Vagina (tissue), 2 donors: ENCODE measurements at regions of chr3 and their contacts with region 1.

Region 1: GRCh38 chr3:184314363-184314699 is at the start of gene EIF4G1:
- DNase-seq: peak in 1 of 2 donors; percentile 96
- H3K4me3 ChIP-seq: peak within 1 kb of the TSS; percentile 66 to 94
- H3K27ac ChIP-seq: peak within 1 kb of the TSS; percentile 94
- H3K4me1 ChIP-seq: peaks cover 41% of the 10 kb centered on the region
- H3K27me3 ChIP-seq: no peaks in the 10 kb centered on the region
- CTCF ChIP-seq: no peak
- POLR2A ChIP-seq: peak in 1 of 2 donors; percentile 54
- total RNA-seq, gene EIF4G1: 207 TPM

Region 2: DNA sequence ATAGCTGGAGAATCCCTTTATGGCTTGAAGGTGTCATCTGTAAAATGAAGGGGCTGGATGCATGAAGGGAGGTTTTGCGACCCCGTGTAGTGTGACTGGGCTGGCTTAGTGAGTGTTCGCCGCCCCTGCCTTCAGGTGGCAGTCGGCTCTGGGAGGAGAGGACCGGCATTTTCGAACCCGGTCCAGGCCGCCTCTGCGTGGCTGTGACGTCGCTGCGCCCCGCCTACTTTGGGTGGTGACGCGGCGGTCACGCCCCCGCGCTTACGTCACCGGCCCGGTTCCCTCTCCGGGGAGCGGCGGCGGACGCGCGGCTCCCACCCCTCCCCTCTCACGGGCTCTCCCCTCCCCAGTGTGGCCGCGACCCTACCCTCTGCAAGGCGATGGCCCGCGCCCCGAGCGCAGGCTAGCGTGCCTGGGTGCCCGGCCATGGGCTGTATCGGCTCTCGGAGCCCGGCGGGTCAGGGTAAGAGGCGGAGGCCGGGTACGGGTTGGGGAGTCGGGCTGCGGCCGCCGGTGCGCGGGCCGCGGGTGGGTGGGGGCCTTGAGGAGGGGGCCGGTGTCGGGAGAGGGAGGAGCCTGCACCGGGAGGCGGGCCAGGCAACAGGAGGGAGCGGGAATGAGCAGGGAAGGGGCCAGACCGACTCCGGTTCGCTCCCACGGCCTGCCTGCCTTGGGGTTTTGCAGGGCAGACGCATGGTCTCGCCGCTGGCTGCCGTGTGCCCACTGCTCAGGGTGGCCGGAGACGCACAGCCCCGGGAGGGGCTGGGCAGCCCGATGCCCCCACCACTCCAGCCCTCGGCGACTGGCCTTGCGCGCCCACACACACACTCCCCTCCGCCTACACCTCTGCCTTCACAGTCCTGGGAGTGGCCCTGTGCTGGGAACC is 21.6 kb after region 1 on chr3:
- intact Hi-C with region 1: loop called (anchors 1 kb)
- DNase-seq: no peak
- H3K4me3 ChIP-seq: peak overlapping the region; percentile 76 to 85
- H3K27ac ChIP-seq: peak overlapping the region; percentile 97
- H3K4me1 ChIP-seq: peaks cover 48% of the 10 kb centered on the region
- H3K27me3 ChIP-seq: no peaks in the 10 kb centered on the region
- CTCF ChIP-seq: no peak
- POLR2A ChIP-seq: peak in 1 of 2 donors; percentile 92

Region 3: DNA sequence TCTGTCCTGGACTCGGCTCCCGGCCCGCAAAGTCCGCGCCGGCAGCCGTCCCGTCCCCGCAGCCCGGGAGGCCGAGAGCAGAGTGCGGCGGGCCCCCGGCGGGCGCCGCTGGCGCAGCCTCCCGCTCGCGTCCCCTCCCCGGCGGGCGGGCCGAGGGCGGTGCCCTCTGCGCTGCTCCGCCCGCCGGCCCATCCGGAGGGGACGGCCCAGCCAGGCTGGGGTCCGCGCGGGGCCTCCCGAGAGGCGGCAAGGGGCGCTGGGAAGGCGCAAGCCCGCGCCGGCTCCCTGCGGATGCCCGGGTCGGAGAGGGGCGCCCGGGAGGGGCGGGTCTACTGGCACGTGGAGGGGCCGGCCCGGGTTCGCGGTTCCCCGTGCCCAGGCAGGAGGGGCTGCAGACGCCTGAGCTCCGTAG is 47.2 kb after region 1 on chr3 and contains the starts of genes CLCN2 and POLR2H:
- intact Hi-C with region 1: loop called (anchors 1 kb)
- DNase-seq: no peak
- H3K4me3 ChIP-seq: peak within 1 kb of the TSS; percentile 87 to 96
- H3K27ac ChIP-seq: peak within 1 kb of the TSS; percentile 92
- H3K4me1 ChIP-seq: peaks cover 31% of the 10 kb centered on the region
- H3K27me3 ChIP-seq: no peaks in the 10 kb centered on the region
- CTCF ChIP-seq: no peak
- POLR2A ChIP-seq: peak in 1 of 2 donors; percentile 87
- total RNA-seq, gene CLCN2: 8.1 TPM
- total RNA-seq, gene POLR2H: 64.3 TPM